K562 (cell line): ENCODE measurements at regions of chr5 and their contacts with region 1.

Region 1: DNA sequence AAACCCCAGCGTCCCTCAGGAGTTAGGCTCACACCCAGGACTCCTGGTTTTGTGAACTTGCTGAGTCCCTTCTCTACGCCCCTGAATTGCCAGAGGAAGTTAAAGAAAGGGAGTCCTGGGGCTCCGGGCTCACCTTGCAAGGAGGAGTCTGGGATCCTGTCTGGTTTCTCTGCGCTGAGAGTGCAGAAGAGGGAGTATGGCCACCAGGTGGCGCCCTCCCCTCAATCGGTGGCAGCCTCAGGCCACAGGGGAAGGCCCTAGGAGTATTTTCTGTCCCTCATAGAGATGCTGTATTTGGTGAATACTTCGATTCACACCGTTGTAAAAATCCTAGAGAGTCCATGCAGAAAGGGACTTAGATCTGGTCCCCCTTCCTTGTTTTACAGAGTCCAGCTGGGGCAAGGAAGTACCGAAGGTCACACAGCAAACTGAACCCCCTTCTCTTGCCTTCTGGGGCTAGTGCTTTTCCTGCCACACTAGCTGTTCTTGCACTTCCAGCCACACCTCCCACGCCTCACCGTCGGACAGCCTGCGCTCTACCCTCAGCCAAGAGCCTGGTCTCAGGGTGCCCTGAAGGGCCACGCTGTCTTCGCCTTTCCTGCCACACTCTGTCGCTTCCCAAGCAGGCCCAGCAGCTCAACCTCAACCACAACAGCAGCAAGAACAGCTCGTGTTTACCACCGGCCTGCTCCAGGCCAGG is 10.2 kb downstream of the HAND1 start:
- DNase-seq: peak; percentile 80 to 88 (median 87)
- ATAC-seq: peak; percentile 99
- H3K4me3 ChIP-seq: no peak overlapping the region
- H3K27ac ChIP-seq: no peak overlapping the region
- H3K4me1 ChIP-seq: no peaks in the 10 kb centered on the region
- H3K27me3 ChIP-seq: peaks cover 17% of the 10 kb centered on the region in 2 experiments
- CTCF ChIP-seq: peak; percentile 88 to 91 (median 89)
- EP300 ChIP-seq: no peak
- POLR2A ChIP-seq: no peak
- RAD21 ChIP-seq: peak; percentile 79 to 88

Region 2: DNA sequence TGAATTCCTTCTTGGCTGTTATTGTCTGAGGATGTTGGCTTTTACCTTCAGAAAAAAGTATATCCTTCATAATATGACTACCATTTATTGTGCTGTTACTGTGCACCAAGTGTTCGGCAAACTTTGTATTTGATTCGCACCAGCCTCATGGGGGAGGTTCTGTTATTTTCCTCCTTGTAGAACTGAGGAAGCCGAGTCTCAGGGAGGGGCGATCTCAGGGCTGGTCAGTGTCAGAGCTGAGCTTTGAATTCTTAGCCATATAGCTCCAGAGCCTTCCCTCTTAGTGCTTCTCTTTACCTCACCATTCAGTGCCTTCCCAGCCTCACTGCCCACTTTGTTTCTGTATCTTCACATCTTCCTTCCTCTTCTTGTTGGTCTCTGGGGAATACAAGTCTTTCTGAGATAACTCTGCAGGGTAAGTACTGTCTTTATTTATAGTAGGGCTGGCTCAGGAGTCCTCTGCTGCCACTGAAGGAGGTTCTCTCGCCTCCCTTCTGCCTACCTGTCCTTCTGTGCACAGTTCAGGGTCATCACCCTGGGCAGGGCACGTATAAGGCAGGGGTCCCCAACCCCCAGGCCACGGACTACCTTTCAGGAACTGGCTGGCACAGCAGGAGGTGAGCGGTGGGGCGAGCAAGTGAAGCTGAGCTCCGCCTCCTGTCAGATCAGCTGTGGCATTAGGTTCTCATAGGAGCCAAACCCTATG is 228.9 kb before region 1 on chr5:
- CTCF ChIA-PET with region 1: no interaction called
- POLR2A ChIA-PET with region 1: no interaction called
- in situ Hi-C with region 1: no loop called
- intact Hi-C with region 1: no loop called
- DNase-seq: no peak
- ATAC-seq: no peak; the same call in 1 of the 3 replicates
- H3K4me3 ChIP-seq: no peak overlapping the region
- H3K27ac ChIP-seq: no peak overlapping the region
- H3K4me1 ChIP-seq: peaks cover 0 to 5% of the 10 kb centered on the region in 2 experiments; a peak in 2 of 5 replicates
- H3K27me3 ChIP-seq: no peaks in the 10 kb centered on the region
- CTCF ChIP-seq: no peak
- EP300 ChIP-seq: no peak
- POLR2A ChIP-seq: no peak
- RAD21 ChIP-seq: no peak

Region 3: DNA sequence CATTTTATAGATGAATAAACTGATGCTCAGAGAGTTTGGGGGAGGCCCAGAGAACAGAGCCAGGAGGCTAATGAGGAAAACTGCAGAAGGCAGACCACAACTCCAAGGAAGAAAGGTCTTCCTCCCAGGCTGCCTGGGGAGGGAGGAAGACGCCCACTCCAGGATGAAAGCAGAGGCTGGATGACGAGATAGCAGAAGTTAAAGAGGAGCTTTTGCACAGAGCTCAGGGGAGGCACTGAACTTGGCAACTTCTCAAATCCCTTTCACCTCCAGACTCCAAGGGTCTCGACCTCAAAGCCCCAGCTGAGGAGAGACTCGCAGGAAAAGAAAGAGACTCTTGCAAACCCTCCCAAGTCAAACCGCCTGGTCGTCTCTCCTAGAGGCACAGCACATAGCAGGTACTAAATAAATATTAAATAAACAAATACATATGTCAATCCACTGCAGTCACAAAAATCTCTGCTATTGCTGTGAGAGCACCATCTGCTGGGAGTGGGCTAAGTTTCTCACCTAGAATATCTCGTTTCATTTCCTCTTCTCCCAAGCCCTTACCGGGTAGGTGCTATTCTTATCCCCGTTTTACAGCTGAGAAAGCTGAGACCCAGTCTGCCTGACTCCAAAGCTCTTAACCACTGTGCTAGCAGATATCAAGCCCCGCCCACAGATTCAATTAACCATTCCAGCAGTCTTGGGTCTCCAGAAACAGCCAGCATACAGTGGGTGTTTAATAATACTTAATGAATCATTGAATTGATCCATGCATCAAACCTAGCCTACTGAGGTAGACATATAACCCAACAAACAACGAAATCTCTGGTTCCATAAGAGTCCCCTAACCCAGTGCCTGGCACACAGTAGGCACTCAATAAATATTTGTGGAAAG is 108.0 kb after region 1 on chr5:
- CTCF ChIA-PET with region 1: no interaction called
- POLR2A ChIA-PET with region 1: no interaction called
- in situ Hi-C with region 1: no loop called
- intact Hi-C with region 1: loop called (anchors 1 kb)
- DNase-seq: no peak
- ATAC-seq: peak; percentile 50; the same call in 2 of the 3 replicates
- H3K4me3 ChIP-seq: no peak overlapping the region
- H3K27ac ChIP-seq: no peak overlapping the region
- H3K4me1 ChIP-seq: no peaks in the 10 kb centered on the region
- H3K27me3 ChIP-seq: peaks cover 17 to 46% of the 10 kb centered on the region in 2 experiments; a peak in 4 of 5 replicates
- CTCF ChIP-seq: peak in 2 of 3 experiments; percentile 24 to 36; a peak in 2 of 6 replicates
- EP300 ChIP-seq: no peak
- POLR2A ChIP-seq: no peak
- RAD21 ChIP-seq: peak in 1 of 2 experiments; percentile 22; a peak in 1 of 4 replicates

Region 4: DNA sequence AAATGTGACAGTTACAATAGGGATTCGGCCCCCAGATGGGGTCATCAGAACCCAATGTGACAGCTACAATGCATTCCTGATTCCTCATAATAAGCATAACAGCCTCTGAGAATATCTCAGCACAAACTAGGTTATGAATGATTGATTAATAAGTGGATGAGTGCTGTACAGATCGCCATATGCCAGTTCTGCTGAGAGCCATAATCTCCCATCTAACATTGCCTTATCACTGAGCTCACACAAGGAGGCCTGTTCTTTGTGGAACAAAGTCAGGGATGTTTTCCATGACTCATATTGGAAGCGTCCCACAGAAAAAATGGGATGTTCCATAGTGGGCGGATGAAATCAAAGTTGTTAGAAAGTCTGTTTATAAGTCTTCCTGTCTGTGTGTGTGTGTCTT is 635.3 kb after region 1 on chr5:
- CTCF ChIA-PET with region 1: no interaction called
- POLR2A ChIA-PET with region 1: no interaction called
- in situ Hi-C with region 1: no loop called
- intact Hi-C with region 1: no loop called
- DNase-seq: no peak
- ATAC-seq: no peak
- H3K4me3 ChIP-seq: no peak overlapping the region
- H3K27ac ChIP-seq: no peak overlapping the region
- H3K4me1 ChIP-seq: no peaks in the 10 kb centered on the region
- H3K27me3 ChIP-seq: 0 out of 5 replicates have a peak, but pooled peaks cover 0 to 3% of the 10 kb centered on the region in 2 experiments
- CTCF ChIP-seq: no peak
- EP300 ChIP-seq: no peak
- POLR2A ChIP-seq: no peak
- RAD21 ChIP-seq: no peak